CD8-positive, alpha-beta memory T cell (primary cell): ENCODE measurements at regions of chr16 and their contacts with region 1.

Region 1: GRCh38 chr16:30065143-30065850 is at the start of gene ALDOA:
- DNase-seq: peak; percentile 91 to 95 (median 92)
- H3K4me3 ChIP-seq: peak within 1 kb of the TSS; percentile 85
- H3K4me3 Mint-ChIP-seq: peak within 1 kb of the TSS; percentile 92 to 100 (median 99)
- H3K27ac ChIP-seq: peak within 1 kb of the TSS; percentile 91
- H3K27ac Mint-ChIP-seq: peak within 1 kb of the TSS; percentile 92 to 99 (median 97)
- H3K4me1 ChIP-seq: peaks cover 44% of the 10 kb centered on the region
- H3K4me1 Mint-ChIP-seq: peaks cover 32 to 45% (median 35%) of the 10 kb centered on the region in 3 donors
- H3K27me3 ChIP-seq: no peaks in the 10 kb centered on the region
- H3K27me3 Mint-ChIP-seq: peaks cover 0 to 3% of the 10 kb centered on the region in 2 donors
- total RNA-seq, gene ALDOA: 1,907 to 1,909 TPM

Region 2: DNA sequence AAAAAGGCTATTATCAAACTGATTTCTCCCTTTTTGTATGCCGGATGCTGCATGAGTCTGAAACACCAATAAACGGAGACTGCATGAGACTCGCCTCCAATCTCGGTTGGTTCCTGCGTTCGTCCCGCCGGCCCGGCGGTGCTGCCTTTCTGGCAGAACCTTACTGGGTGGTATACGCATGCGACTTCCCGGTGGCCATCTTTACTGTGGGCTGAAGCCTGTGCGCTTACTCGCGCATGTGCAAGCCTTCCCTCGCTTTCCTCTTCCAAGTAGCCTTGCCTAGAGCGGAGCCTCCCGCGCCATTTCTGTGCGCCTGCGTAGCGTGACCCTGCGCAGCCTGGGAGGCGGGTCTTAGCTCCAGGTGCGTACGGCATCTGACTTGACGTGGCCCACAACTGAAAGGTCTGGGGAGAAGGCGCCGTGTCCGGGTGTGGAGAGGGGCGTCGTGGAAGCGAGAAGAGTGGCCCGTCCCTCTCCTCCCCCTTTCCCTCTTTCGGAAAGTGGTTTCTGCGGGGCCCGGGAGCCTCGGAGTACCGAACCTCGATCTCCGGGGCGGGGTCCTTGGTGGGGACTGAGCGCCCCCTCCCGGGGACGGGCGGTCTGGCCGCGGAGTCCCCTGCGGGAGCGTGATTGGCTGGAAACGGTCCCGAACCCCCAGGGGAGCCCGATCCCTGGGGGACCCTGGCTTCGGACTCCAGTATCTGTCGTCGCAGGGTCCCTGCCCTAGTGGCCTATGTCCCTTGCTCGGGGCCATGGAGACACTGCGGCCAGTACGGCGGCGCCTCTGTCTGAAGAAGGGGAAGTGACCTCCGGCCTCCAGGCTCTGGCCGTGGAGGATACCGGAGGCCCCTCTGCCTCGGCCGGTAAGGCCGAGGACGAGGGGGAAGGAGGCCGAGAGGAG is 249.3 kb before region 1 on chr16 and contains the start of gene PAGR1:
- CTCF ChIA-PET with region 1: no interaction called
- POLR2A ChIA-PET with region 1: interaction called, 11 read pairs
- DNase-seq: peak; percentile 95 to 99 (median 99)
- H3K4me3 ChIP-seq: peak within 1 kb of the TSS; percentile 94
- H3K4me3 Mint-ChIP-seq: peak within 1 kb of the TSS; percentile 89 to 99 (median 93)
- H3K27ac ChIP-seq: peak within 1 kb of the TSS; percentile 89
- H3K27ac Mint-ChIP-seq: peak within 1 kb of the TSS; percentile 93 to 99 (median 98)
- H3K4me1 ChIP-seq: peaks cover 54% of the 10 kb centered on the region
- H3K4me1 Mint-ChIP-seq: peaks cover 53 to 79% (median 62%) of the 10 kb centered on the region in 3 donors
- H3K27me3 ChIP-seq: no peaks in the 10 kb centered on the region
- H3K27me3 Mint-ChIP-seq: peaks cover 0 to 4% of the 10 kb centered on the region in 2 donors
- total RNA-seq, gene PAGR1: 41.9 to 44.3 TPM

Region 3: GRCh38 chr16:30075507-30076275 is 10.4 kb after region 1 on chr16 and contains the start of gene PPP4C:
- CTCF ChIA-PET with region 1: interaction called, 4 read pairs
- POLR2A ChIA-PET with region 1: interaction called, 50 read pairs
- DNase-seq: peak; percentile 90 to 93 (median 91)
- H3K4me3 ChIP-seq: peak within 1 kb of the TSS; percentile 67
- H3K4me3 Mint-ChIP-seq: peak within 1 kb of the TSS; percentile 89 to 97 (median 92)
- H3K27ac ChIP-seq: peak within 1 kb of the TSS; percentile 83
- H3K27ac Mint-ChIP-seq: peak within 1 kb of the TSS; percentile 92 to 98 (median 96)
- H3K4me1 ChIP-seq: peaks cover 32% of the 10 kb centered on the region
- H3K4me1 Mint-ChIP-seq: peaks cover 33 to 52% (median 50%) of the 10 kb centered on the region in 3 donors
- H3K27me3 ChIP-seq: no peaks in the 10 kb centered on the region
- H3K27me3 Mint-ChIP-seq: peaks cover 0 to 1% of the 10 kb centered on the region in 2 donors
- total RNA-seq, gene PPP4C: 137 to 149 TPM

Region 4: GRCh38 chr16:30183233-30184095 is 118.2 kb after region 1 on chr16 and contains the start of gene CORO1A:
- CTCF ChIA-PET with region 1: interaction called, 4 read pairs
- POLR2A ChIA-PET with region 1: interaction called, 34 read pairs
- DNase-seq: peak; percentile 75 to 88 (median 80)
- H3K4me3 ChIP-seq: peak within 1 kb of the TSS; percentile 99
- H3K4me3 Mint-ChIP-seq: peak within 1 kb of the TSS; percentile 94 to 100 (median 98)
- H3K27ac ChIP-seq: peak within 1 kb of the TSS; percentile 71
- H3K27ac Mint-ChIP-seq: peak within 1 kb of the TSS; percentile 92 to 100 (median 96)
- H3K4me1 ChIP-seq: peaks cover 33% of the 10 kb centered on the region
- H3K4me1 Mint-ChIP-seq: peaks cover 25 to 43% (median 34%) of the 10 kb centered on the region in 3 donors
- H3K27me3 ChIP-seq: no peaks in the 10 kb centered on the region
- H3K27me3 Mint-ChIP-seq: peaks cover 0 to 14% of the 10 kb centered on the region in 2 donors
- total RNA-seq, gene CORO1A: 889 to 952 TPM

Region 5: GRCh38 chr16:30378236-30379204 is 313.2 kb after region 1 on chr16:
- CTCF ChIA-PET with region 1: no interaction called
- POLR2A ChIA-PET with region 1: interaction called, 12 read pairs
- DNase-seq: peak; percentile 99 to 100 (median 99)
- H3K4me3 ChIP-seq: peak overlapping the region; percentile 99
- H3K4me3 Mint-ChIP-seq: peak overlapping the region; percentile 92 to 100 (median 96)
- H3K27ac ChIP-seq: peak overlapping the region; percentile 99
- H3K27ac Mint-ChIP-seq: peak overlapping the region; percentile 99 to 100 (median 100)
- H3K4me1 ChIP-seq: peaks cover 64% of the 10 kb centered on the region
- H3K4me1 Mint-ChIP-seq: peaks cover 55 to 63% (median 55%) of the 10 kb centered on the region in 3 donors
- H3K27me3 ChIP-seq: no peaks in the 10 kb centered on the region
- H3K27me3 Mint-ChIP-seq: peaks cover 0 to 2% of the 10 kb centered on the region in 2 donors

Region 6: DNA sequence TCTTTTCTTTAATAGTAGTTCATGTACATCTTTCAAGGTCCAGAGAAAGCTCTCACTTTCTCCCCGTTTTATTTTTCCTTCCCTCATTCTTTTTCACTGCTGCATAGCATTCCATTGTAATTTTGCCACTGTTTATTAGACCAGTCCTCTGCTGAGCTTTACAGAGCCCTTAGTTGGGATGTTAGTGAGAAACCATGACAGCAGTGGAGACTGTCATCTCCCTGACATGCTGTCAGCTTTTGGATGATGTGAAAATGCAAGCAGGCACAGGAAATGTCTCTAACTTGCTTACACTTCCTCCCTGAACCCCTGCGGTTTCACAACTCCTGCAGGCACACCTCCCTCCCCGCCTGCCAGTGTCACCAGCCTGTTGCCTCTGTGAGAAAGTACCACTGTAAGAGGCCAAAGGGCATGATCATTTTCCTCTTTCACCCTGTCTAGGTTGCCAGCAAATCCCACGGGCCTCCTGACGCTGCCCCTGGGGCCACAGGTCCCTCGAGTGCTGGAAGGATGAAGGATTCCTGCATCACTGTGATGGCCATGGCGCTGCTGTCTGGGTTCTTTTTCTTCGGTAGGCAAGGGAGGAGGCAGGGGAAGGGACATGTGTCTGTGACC is 407.1 kb after region 1 on chr16 and contains the start of gene ITGAL:
- CTCF ChIA-PET with region 1: no interaction called
- POLR2A ChIA-PET with region 1: interaction called, 10 read pairs
- DNase-seq: peak; percentile 76 to 93 (median 84)
- H3K4me3 ChIP-seq: peak within 1 kb of the TSS; percentile 91
- H3K4me3 Mint-ChIP-seq: peak within 1 kb of the TSS; percentile 96 to 100 (median 98)
- H3K27ac ChIP-seq: peak within 1 kb of the TSS; percentile 74
- H3K27ac Mint-ChIP-seq: peak within 1 kb of the TSS; percentile 94 to 99 (median 97)
- H3K4me1 ChIP-seq: peaks cover 65% of the 10 kb centered on the region
- H3K4me1 Mint-ChIP-seq: peaks cover 54 to 76% (median 56%) of the 10 kb centered on the region in 3 donors
- H3K27me3 ChIP-seq: no peaks in the 10 kb centered on the region
- H3K27me3 Mint-ChIP-seq: peaks cover 0 to 1% of the 10 kb centered on the region in 2 donors
- total RNA-seq, gene ITGAL: 333 to 363 TPM